ENCODE measurements at regions of chr22 and their contacts with region 1.

Region 1: GRCh38 chr22:22099833-22100812 is 117.5 kb upstream of the TOP3B start:
- DNase-seq: no peak
- H3K4me3 ChIP-seq: no peak overlapping the region
- H3K27ac ChIP-seq: no peak overlapping the region
- H3K4me1 ChIP-seq: no peaks in the 10 kb centered on the region
- H3K27me3 ChIP-seq: no peaks in the 10 kb centered on the region
- CTCF ChIP-seq: peak; percentile 22 to 53

Region 2: GRCh38 chr22:22085702-22086500 is 14.2 kb before region 1 on chr22:
- CTCF ChIA-PET with region 1: no interaction called
- dilution Hi-C with region 1: no loop called
- in situ Hi-C with region 1: no loop called
- intact Hi-C with region 1: no loop called
- DNase-seq: peak; percentile 50
- H3K4me3 ChIP-seq: no peak overlapping the region
- H3K27ac ChIP-seq: no peak overlapping the region
- H3K4me1 ChIP-seq: peaks cover 9% of the 10 kb centered on the region
- H3K27me3 ChIP-seq: no peaks in the 10 kb centered on the region
- CTCF ChIP-seq: no peak

Region 3: GRCh38 chr22:22161924-22162851 is 62.1 kb after region 1 on chr22:
- CTCF ChIA-PET with region 1: no interaction called
- dilution Hi-C with region 1: loop called (anchors 5 kb)
- in situ Hi-C with region 1: no loop called
- intact Hi-C with region 1: no loop called
- DNase-seq: no peak
- H3K4me3 ChIP-seq: no peak overlapping the region
- H3K27ac ChIP-seq: no peak overlapping the region
- H3K4me1 ChIP-seq: no peaks in the 10 kb centered on the region
- H3K27me3 ChIP-seq: no peaks in the 10 kb centered on the region
- CTCF ChIP-seq: no peak